ENCODE measurements at regions of chr19 and their contacts with region 1.

Region 1: DNA sequence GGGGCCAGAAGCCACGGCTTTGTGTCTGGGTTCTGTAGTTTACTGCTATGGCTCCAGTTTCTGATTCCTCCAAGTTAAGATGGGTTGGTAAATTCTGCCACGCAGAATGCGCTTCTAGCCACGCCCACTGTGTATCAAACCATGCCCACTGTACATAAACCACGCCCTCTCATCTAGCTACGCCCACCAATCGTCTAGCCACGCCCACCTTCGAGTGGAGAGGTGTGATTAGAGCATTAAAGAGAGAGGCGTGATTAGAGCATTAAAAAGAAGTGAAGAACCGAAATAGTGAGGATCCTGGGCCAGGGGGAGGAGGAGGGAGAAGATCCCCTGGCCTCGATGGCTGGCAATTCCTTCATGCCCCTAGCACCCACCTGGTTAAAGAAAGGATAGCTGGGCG is 43.7 kb upstream of the ADGRE5 start:
- DNase-seq: no peak
- H3K4me3 ChIP-seq: no peak overlapping the region
- H3K27ac ChIP-seq: no peak overlapping the region
- H3K4me1 ChIP-seq: peaks cover 0 to 7% (median 5%) of the 10 kb centered on the region in 4 donors
- H3K27me3 ChIP-seq: peaks cover 0 to 2% of the 10 kb centered on the region in 2 donors
- CTCF ChIP-seq: no peak

Region 2: GRCh38 chr19:13880059-13881043 is 457.2 kb before region 1 on chr19:
- intact Hi-C with region 1: loop called (anchors 10 kb)
- DNase-seq: peak; percentile 98 to 99
- H3K4me3 ChIP-seq: peak overlapping the region; percentile 28 to 42
- H3K27ac ChIP-seq: peak overlapping the region; percentile 80 to 90
- H3K4me1 ChIP-seq: peaks cover 0 to 54% (median 15%) of the 10 kb centered on the region in 4 donors
- H3K27me3 ChIP-seq: no peaks in the 10 kb centered on the region
- CTCF ChIP-seq: peak; percentile 99 to 100

Region 3: GRCh38 chr19:14300303-14300702 is 37.2 kb before region 1 on chr19:
- intact Hi-C with region 1: no loop called
- DNase-seq: no peak
- H3K4me3 ChIP-seq: no peak overlapping the region
- H3K27ac ChIP-seq: no peak overlapping the region
- H3K4me1 ChIP-seq: no peaks in the 10 kb centered on the region
- H3K27me3 ChIP-seq: peaks cover 0 to 12% of the 10 kb centered on the region in 2 donors
- CTCF ChIP-seq: no peak